Mammary epithelial cell (primary cell): ENCODE measurements at regions of chr19 and their contacts with region 1.

Region 1: DNA sequence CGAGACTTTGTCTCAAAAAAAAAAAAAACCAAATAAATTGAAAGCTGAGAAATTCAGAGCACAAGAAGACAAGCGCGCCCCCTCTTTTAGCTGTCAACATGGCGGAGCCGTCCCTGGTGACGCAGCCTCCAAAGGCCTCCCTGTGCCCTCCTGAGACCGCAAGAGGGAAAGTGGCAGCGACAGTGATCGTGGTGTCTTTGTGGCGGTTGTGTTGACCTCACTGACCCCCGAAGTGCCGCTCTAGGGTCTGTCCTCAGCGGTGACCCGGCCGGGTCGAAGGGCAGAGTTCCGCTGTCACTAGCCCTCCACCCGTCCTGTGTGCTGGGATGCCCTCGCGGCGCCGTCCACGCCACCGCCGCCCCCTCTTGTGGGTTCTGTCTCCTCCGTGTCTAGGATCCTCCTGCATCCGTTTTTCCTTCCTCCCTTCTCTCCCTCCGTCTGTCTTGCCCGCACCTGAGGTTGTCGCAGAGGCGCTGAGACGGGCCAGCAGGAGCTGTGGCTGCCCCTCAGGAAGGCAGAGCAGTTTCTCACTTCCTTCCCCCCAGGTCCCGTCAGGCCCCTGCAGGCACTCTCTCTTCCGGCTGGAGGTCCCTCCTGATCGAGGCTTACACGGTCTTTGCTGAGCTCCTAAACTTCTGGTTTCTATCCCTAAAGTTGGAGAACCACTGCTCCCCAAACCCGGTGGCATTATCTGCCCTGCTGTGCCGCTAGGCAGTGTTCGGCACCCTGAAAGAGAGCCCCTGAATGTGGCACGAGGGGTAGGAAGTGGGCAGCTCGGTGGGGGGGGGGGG is 7.2 kb downstream of the UHRF1 start:
- DNase-seq: no peak
- H3K4me3 ChIP-seq: no peak overlapping the region
- H3K27ac ChIP-seq: no peak overlapping the region
- H3K4me1 ChIP-seq: peaks cover 48% of the 10 kb centered on the region
- H3K27me3 ChIP-seq: no peaks in the 10 kb centered on the region
- CTCF ChIP-seq: no peak

Region 2: GRCh38 chr19:4851551-4852290 is 64.8 kb before region 1 on chr19:
- CTCF ChIA-PET with region 1: interaction called, 16 read pairs
- dilution Hi-C with region 1: no loop called
- in situ Hi-C with region 1: no loop called
- intact Hi-C with region 1: no loop called
- DNase-seq: no peak
- H3K4me3 ChIP-seq: no peak overlapping the region
- H3K27ac ChIP-seq: no peak overlapping the region
- H3K4me1 ChIP-seq: no peaks in the 10 kb centered on the region
- H3K27me3 ChIP-seq: no peaks in the 10 kb centered on the region
- CTCF ChIP-seq: peak; percentile 67 to 84

Region 3: GRCh38 chr19:4968462-4969291 is 52.2 kb after region 1 on chr19 and contains the start of gene KDM4B:
- CTCF ChIA-PET with region 1: interaction called, 4 read pairs
- dilution Hi-C with region 1: no loop called
- in situ Hi-C with region 1: no loop called
- intact Hi-C with region 1: loop called (anchors 2 kb)
- DNase-seq: peak; percentile 100
- H3K4me3 ChIP-seq: peak within 1 kb of the TSS; percentile 67 to 84 (median 68)
- H3K27ac ChIP-seq: peak within 1 kb of the TSS; percentile 58
- H3K4me1 ChIP-seq: peaks cover 28% of the 10 kb centered on the region
- H3K27me3 ChIP-seq: no peaks in the 10 kb centered on the region
- CTCF ChIP-seq: no peak
- total RNA-seq, gene KDM4B: 20.3 to 33.5 TPM

Region 4: GRCh38 chr19:5018224-5019015 is 101.9 kb after region 1 on chr19:
- CTCF ChIA-PET with region 1: no interaction called
- dilution Hi-C with region 1: no loop called
- in situ Hi-C with region 1: no loop called
- intact Hi-C with region 1: no loop called
- DNase-seq: no peak
- H3K4me3 ChIP-seq: no peak overlapping the region
- H3K27ac ChIP-seq: no peak overlapping the region
- H3K4me1 ChIP-seq: peaks cover 16% of the 10 kb centered on the region
- H3K27me3 ChIP-seq: no peaks in the 10 kb centered on the region
- CTCF ChIP-seq: no peak

Region 5: DNA sequence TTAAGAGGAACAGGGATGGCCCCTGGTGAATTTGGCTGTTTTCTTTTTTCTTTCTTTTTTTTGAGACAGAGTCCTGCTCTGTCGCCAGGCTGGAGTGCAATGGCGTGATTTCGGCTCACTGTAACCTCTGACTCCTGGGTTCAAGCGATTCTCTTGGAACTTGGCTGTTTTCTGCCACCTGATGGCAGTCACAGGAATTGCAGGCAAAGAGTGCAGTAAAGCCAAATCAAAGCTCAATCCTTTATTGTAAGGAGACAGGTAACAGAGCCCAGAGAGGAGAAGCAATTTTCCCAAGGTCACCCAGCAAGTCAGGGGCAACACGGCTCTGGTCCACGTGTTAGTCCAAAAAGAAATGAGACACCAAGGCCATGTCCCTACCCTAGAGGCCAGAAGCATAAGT is 645.1 kb after region 1 on chr19:
- CTCF ChIA-PET with region 1: no interaction called
- dilution Hi-C with region 1: no loop called
- in situ Hi-C with region 1: no loop called
- intact Hi-C with region 1: no loop called
- DNase-seq: no peak
- H3K4me3 ChIP-seq: no peak overlapping the region
- H3K27ac ChIP-seq: no peak overlapping the region
- H3K4me1 ChIP-seq: peaks cover 17% of the 10 kb centered on the region
- H3K27me3 ChIP-seq: peaks cover 2% of the 10 kb centered on the region
- CTCF ChIP-seq: peak; percentile 54 to 56